GM18951 (cell line): ENCODE measurements at regions of chr9 and their contacts with region 1.

Region 1: GRCh38 chr9:72038890-72039410 is 21.5 kb downstream of the C9orf57 start:
- POLR2A ChIP-seq: no peak

Region 2: DNA sequence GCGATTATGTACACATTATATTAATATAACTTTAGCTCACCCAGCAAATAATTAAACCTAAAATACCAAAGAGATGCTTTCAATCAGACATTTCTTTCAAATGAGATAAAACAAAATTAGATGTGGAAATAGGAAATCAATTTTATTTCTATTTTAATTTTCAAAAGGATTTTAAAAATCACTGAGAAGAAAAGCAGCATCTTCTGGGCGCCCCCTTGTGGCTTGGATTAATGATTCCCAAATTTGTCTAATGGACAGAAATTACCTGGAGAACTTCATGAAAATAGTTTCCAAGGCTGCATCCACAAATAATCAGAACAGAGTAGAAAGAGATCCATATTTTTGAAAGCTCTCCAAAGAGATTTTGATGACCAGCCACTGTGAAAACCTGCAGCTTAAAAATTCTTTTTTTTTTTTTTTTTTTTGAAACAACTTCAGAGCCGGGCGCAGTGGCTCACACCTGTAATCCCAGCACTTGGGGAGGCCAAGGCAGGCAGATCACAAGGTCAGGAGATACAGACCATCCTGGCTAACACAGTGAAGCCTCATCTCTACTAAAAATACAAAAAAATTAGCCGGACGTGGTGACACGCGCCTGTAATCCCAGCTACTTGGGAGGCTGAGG is 219.7 kb before region 1 on chr9:
- in situ Hi-C with region 1: loop called (anchors 10 kb)
- POLR2A ChIP-seq: no peak

Region 3: DNA sequence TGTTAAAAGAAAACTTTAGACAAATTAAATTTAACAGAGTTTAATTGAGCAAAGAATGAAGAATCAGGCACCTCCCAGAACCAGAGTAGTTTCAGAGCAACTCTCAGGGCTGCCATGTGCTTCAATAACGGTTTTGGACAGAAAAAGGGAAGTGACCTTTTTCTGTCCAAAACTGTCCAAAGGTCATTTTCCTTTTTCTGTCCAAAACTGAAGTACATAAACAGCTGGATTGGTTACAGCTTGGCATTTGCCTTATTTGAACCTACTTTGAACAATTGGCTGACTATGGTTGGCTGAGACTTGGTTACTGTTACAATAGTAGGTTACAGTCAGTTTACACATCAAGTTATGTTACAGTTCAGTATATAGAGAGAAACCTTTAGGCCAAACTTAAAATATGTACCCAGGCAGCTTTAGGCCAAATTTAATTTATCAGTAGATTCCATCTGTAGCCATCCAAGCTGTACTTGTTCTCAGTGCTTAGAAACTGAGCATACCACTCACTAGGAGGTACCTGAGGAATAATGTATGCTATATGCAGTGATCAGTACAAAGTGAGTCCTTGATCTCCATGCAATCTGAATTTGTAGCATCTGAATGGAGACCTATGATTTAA is 83.5 kb before region 1 on chr9:
- in situ Hi-C with region 1: no loop called
- POLR2A ChIP-seq: no peak

Region 4: GRCh38 chr9:72271613-72272478 is 232.9 kb after region 1 on chr9:
- in situ Hi-C with region 1: loop called (anchors 5 kb)
- POLR2A ChIP-seq: no peak

Region 5: GRCh38 chr9:72592502-72593403 is 553.8 kb after region 1 on chr9:
- in situ Hi-C with region 1: loop called (anchors 25 kb)
- POLR2A ChIP-seq: no peak

Region 6: GRCh38 chr9:72807765-72808445 is 769.0 kb after region 1 on chr9:
- in situ Hi-C with region 1: loop called (anchors 25 kb)
- POLR2A ChIP-seq: no peak